Activated naive CD4-positive, alpha-beta T cell treated with anti-CD3 and anti-CD28 coated beads for 36 hours (primary cell): ENCODE measurements at regions of chr4 and their contacts with region 1.

Region 1: DNA sequence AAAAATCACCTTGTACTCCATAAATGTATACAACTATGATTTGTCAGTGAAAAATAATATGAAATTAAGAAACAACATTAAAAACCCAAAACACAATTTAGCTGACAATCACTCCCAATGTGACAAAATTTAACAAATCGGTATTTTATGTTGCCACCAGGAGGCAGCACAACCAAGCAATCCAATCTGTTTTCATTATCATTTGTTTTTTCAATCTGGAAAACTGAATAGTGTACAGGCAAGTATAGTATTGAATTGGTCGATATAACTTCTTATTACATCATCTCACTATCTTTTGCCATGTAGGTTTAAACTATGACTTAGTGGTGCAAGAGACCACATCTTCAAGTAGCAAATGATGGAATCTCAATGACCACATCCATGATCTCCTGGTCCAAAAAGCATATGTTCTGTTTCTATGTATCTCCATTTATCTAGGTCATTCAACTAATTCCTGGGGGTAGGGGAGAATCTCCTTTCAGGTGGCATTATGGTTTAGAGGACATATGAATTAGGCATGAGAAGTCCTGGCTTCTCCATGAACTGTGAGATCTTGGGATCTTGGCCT is 112.9 kb upstream of the AGA start:
- DNase-seq: peak; percentile 50
- H3K4me3 Mint-ChIP-seq: no peak overlapping the region
- H3K27ac Mint-ChIP-seq: no peak overlapping the region
- H3K4me1 Mint-ChIP-seq: no peaks in the 10 kb centered on the region
- H3K27me3 Mint-ChIP-seq: no peaks in the 10 kb centered on the region

Region 2: DNA sequence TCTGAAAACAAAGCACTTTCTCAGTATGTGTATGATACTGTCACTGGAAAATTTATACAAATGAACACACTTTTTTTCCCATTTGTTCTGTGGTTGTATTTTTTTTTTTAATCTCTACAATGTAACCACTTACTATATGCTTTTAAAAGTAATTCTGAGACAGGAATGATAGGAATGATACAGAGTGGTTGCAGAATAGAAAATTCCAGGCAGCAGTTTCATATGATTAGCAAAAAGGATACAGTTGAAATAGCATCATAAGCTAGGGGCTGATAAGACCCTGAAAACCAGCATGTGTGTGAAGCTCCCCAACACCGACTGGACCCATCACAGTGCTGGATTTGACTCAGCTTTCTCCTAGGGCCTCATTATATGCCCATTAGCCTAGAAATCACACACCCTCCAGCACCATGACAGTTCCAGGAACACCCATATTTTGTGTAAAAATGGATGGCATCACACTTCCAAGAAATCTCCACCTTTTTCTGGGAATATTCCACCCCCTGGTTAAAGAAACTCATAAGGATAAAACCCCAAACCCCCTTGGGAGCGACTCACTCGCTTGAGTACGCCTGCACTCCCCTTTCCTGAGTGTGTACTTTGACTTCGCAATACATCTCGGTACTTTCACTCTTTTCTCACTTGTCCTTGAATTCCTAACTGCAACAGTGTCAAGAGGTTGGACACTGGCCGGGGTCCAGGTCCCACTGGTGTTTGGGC is 35.5 kb before region 1 on chr4:
- CTCF ChIA-PET with region 1: no interaction called
- intact Hi-C with region 1: no loop called
- DNase-seq: no peak
- H3K4me3 Mint-ChIP-seq: no peak overlapping the region
- H3K27ac Mint-ChIP-seq: no peak overlapping the region
- H3K4me1 Mint-ChIP-seq: no peaks in the 10 kb centered on the region
- H3K27me3 Mint-ChIP-seq: no peaks in the 10 kb centered on the region

Region 3: GRCh38 chr4:177596035-177596434 is 40.9 kb after region 1 on chr4:
- CTCF ChIA-PET with region 1: no interaction called
- intact Hi-C with region 1: loop called (anchors 2 kb)
- DNase-seq: peak; percentile 71
- H3K4me3 Mint-ChIP-seq: no peak overlapping the region
- H3K27ac Mint-ChIP-seq: no peak overlapping the region
- H3K4me1 Mint-ChIP-seq: peaks cover 4% of the 10 kb centered on the region
- H3K27me3 Mint-ChIP-seq: no peaks in the 10 kb centered on the region